B cell (primary cell): ENCODE measurements at regions of chr17 and their contacts with region 1.

Region 1: GRCh38 chr17:3827124-3827773 is 18.8 kb downstream of the NCBP3 start:
- DNase-seq: peak; percentile 80
- ATAC-seq: peak; percentile 62
- H3K4me3 ChIP-seq: no peak overlapping the region
- H3K4me3 Mint-ChIP-seq: no peak overlapping the region
- H3K27ac ChIP-seq: no peak overlapping the region
- H3K27ac Mint-ChIP-seq: no peak overlapping the region
- H3K4me1 ChIP-seq: no peaks in the 10 kb centered on the region
- H3K4me1 Mint-ChIP-seq: peaks cover 1% of the 10 kb centered on the region
- H3K27me3 ChIP-seq: no peaks in the 10 kb centered on the region
- H3K27me3 Mint-ChIP-seq: no peaks in the 10 kb centered on the region
- CTCF ChIP-seq: peak; percentile 95

Region 2: GRCh38 chr17:3602499-3602898 is 224.8 kb before region 1 on chr17:
- CTCF ChIA-PET with region 1: interaction called, 31 read pairs
- POLR2A ChIA-PET with region 1: no interaction called
- intact Hi-C with region 1: no loop called
- DNase-seq: peak; percentile 58
- ATAC-seq: peak; percentile 60
- H3K4me3 ChIP-seq: no peak overlapping the region
- H3K4me3 Mint-ChIP-seq: no peak overlapping the region
- H3K27ac ChIP-seq: no peak overlapping the region
- H3K27ac Mint-ChIP-seq: no peak overlapping the region
- H3K4me1 ChIP-seq: no peaks in the 10 kb centered on the region
- H3K4me1 Mint-ChIP-seq: peaks cover 2% of the 10 kb centered on the region
- H3K27me3 ChIP-seq: no peaks in the 10 kb centered on the region
- H3K27me3 Mint-ChIP-seq: no peaks in the 10 kb centered on the region
- CTCF ChIP-seq: peak; percentile 43

Region 3: GRCh38 chr17:3723556-3724369 is 103.5 kb before region 1 on chr17 and contains the start of gene HASPIN:
- CTCF ChIA-PET with region 1: interaction called, 13 read pairs
- POLR2A ChIA-PET with region 1: interaction called, 3 read pairs
- intact Hi-C with region 1: no loop called
- DNase-seq: peak; percentile 95
- ATAC-seq: peak; percentile 72
- H3K4me3 ChIP-seq: peak within 1 kb of the TSS; percentile 76 to 96 (median 91)
- H3K4me3 Mint-ChIP-seq: peak within 1 kb of the TSS; percentile 96
- H3K27ac ChIP-seq: peak within 1 kb of the TSS; percentile 49 to 78
- H3K27ac Mint-ChIP-seq: peak within 1 kb of the TSS; percentile 94
- H3K4me1 ChIP-seq: peaks cover 48 to 69% of the 10 kb centered on the region in 2 donors
- H3K4me1 Mint-ChIP-seq: peaks cover 60% of the 10 kb centered on the region
- H3K27me3 ChIP-seq: no peaks in the 10 kb centered on the region
- H3K27me3 Mint-ChIP-seq: no peaks in the 10 kb centered on the region
- CTCF ChIP-seq: peak; percentile 26
- total RNA-seq, gene HASPIN: 2.4 and 3.1 TPM in 2 replicates

Region 4: DNA sequence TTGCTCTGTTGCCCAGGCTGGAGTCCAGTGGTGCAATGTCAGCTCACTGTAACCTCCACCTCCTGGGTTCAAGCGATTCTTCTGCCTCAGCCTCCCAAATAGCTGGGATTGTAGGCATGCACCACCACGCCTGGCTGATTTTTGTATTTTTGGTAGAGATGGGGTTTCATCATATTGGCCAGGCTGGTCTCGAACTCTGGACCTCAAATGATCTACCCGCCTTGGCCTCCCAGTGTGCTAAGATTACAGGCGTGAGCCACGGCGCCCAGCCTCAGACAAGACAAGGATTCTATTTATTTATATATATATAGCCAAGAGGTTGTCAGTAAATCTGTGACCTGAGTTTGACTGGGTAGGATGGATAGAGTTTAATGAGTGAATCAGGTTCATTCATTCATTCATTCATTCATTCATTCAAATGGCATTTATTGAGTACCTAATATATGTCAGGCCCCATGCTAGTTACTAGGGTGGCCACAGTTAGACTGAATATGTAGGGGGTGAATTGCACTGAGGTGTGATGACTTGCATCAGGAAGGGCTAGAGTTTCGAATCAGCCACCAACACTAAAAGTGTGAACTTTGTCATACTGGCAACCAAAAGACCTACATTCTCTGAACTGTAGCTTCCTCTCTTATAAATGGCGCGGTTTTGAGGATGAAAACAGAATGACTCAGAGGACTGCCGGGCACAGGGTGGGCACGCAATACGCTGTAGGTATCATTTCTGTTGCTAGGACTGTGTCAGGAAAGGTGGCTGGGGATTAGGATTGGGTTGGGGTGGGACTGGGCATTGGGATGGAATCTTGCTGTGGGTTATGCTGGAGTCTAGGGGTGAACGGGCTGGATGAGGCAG is 64.1 kb before region 1 on chr17:
- CTCF ChIA-PET with region 1: interaction called, 56 read pairs
- POLR2A ChIA-PET with region 1: interaction called, 11 read pairs
- intact Hi-C with region 1: loop called (anchors 1 kb)
- DNase-seq: no peak
- ATAC-seq: peak; percentile 43
- H3K4me3 ChIP-seq: no peak overlapping the region
- H3K4me3 Mint-ChIP-seq: peak overlapping the region; percentile 59
- H3K27ac ChIP-seq: no peak overlapping the region
- H3K27ac Mint-ChIP-seq: peak overlapping the region; percentile 88
- H3K4me1 ChIP-seq: peaks cover 10 to 22% of the 10 kb centered on the region in 2 donors
- H3K4me1 Mint-ChIP-seq: peaks cover 20% of the 10 kb centered on the region
- H3K27me3 ChIP-seq: no peaks in the 10 kb centered on the region
- H3K27me3 Mint-ChIP-seq: no peaks in the 10 kb centered on the region
- CTCF ChIP-seq: no peak

Region 5: GRCh38 chr17:3804503-3804931 is 22.7 kb before region 1 on chr17:
- CTCF ChIA-PET with region 1: interaction called, 23 read pairs
- POLR2A ChIA-PET with region 1: no interaction called
- intact Hi-C with region 1: no loop called
- DNase-seq: peak; percentile 36
- ATAC-seq: peak; percentile 77
- H3K4me3 ChIP-seq: peak overlapping the region in 1 of 5 experiments; percentile 19
- H3K4me3 Mint-ChIP-seq: peak overlapping the region; percentile 71
- H3K27ac ChIP-seq: no peak overlapping the region
- H3K27ac Mint-ChIP-seq: peak overlapping the region; percentile 90
- H3K4me1 ChIP-seq: peaks cover 0 to 25% of the 10 kb centered on the region in 2 donors
- H3K4me1 Mint-ChIP-seq: peaks cover 43% of the 10 kb centered on the region
- H3K27me3 ChIP-seq: no peaks in the 10 kb centered on the region
- H3K27me3 Mint-ChIP-seq: no peaks in the 10 kb centered on the region
- CTCF ChIP-seq: no peak